Dorsolateral prefrontal cortex (tissue), 120 donors: ENCODE measurements at regions of chr6 and their contacts with region 1.

Region 1: GRCh38 chr6:72411872-72412708 is 209.8 kb upstream of the KCNQ5 start:
- DNase-seq: peak; percentile 56 to 90 (median 78)
- H3K4me3 ChIP-seq: no peak overlapping the region
- H3K27ac ChIP-seq: no peak overlapping the region
- H3K27me3 ChIP-seq: peaks cover 0 to 3% (median 0%) of the 10 kb centered on the region in 45 donors
- CTCF ChIP-seq: peak; percentile 100

Region 2: GRCh38 chr6:72580281-72580940 is 168.3 kb after region 1 on chr6:
- intact Hi-C with region 1: loop called in 1 of 2 experiments (anchors 5 kb)
- DNase-seq: peak in 2 of 10 donors; percentile 30 to 41
- H3K4me3 ChIP-seq: no peak overlapping the region
- H3K27ac ChIP-seq: no peak overlapping the region
- H3K27me3 ChIP-seq: no peaks in the 10 kb centered on the region
- CTCF ChIP-seq: peak in 50 of 56 donors; percentile 21 to 65 (median 42)

Region 3: GRCh38 chr6:73129653-73130443 is 717.8 kb after region 1 on chr6:
- intact Hi-C with region 1: loop called (anchors 2 to 5 kb)
- DNase-seq: peak; percentile 23 to 86 (median 80)
- H3K4me3 ChIP-seq: peak overlapping the region in 1 of 59 donors; percentile 37
- H3K27ac ChIP-seq: no peak overlapping the region
- H3K27me3 ChIP-seq: no peaks in the 10 kb centered on the region
- CTCF ChIP-seq: peak; percentile 57 to 97 (median 90)

Region 4: DNA sequence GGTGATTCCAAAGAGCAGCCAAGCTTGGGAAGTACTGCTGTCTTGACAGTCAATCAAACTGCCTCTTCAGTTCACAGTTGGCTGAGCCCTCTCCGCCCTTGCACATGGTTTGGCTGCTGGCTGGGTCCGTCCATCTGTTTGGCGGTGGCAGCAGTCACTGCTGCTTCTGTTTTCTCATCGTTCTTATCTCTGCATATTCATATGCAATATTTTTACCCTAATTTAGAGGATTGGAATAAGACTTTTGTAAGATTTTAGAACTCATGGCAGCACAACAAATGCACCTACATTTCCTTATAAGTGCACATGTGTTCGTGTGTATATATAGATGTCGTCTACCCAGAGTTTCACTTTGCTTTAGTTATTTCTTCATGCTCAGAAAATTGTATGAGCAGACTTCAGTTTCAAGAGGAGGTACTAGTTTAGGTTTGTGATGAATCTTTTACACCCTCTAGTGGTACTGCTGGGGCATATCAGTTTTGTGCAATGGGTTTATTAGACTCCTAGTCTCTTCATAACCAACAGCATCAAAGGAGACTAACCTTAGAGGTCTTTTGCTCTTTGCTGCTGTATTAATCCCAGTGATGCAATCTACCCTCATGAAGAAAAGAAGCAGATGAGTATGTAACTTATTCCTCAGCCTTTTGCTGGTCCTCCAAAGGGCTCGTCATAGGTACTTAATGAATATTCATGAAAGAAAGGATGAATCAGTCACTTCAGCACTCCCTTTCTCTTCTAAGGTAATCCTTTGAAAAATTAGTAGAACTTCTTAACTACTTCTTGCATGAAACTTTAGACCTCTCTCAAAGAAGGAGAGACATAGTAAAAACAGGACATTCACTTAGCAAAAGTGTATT is 768.9 kb after region 1 on chr6:
- intact Hi-C with region 1: loop called (anchors 2 to 5 kb)
- DNase-seq: peak in 6 of 10 donors; percentile 20 to 57 (median 50)
- H3K4me3 ChIP-seq: peak overlapping the region in 47 of 59 donors; percentile 1 to 53 (median 34)
- H3K27ac ChIP-seq: peak overlapping the region in 28 of 59 donors; percentile 2 to 79 (median 34)
- H3K27me3 ChIP-seq: peaks cover 0 to 2% (median 0%) of the 10 kb centered on the region in 45 donors
- CTCF ChIP-seq: peak; percentile 71 to 93 (median 82)